Mammary epithelial cell (primary cell): ENCODE measurements at regions of chr6 and their contacts with region 1.

Region 1: DNA sequence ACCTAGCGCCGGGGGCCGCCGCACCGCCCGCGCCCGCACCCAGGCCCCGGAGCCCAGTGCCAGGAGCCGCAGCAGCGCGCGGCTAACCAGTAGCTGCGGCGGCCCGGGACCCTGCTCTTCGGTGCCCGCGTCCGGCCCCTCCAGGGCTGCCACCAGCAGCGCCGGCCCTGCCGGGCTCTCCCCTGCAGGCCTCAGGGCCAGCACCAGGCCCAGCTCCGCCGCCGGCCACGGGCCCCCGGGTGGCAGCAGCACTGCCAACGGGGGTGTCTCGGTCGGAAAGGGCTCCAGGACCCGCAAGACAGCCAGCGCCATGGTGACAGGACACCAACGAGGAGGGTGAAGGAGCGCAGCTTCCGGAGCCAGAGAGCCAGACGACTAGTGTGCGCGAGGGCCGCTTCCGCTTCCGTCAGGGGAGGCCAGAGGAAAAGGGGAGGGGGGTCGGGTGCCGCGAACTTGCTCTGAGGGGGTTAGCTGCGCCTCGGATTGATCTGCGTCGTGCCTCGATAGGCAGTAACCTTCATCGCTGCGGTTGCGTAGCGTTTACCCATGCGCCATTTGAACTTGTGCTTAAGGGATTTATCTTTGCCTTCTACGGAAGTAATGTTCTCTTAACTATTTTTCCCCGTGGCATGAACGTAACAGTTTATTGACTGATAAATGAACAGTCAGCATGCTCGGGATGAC is at the start of gene PEX6:
- DNase-seq: peak; percentile 79
- H3K4me3 ChIP-seq: peak within 1 kb of the TSS; percentile 47 to 82 (median 58)
- H3K27ac ChIP-seq: peak within 1 kb of the TSS; percentile 63
- H3K4me1 ChIP-seq: peaks cover 30% of the 10 kb centered on the region
- H3K27me3 ChIP-seq: no peaks in the 10 kb centered on the region
- CTCF ChIP-seq: no peak
- total RNA-seq, gene PEX6: 12.9 to 22.2 TPM

Region 2: DNA sequence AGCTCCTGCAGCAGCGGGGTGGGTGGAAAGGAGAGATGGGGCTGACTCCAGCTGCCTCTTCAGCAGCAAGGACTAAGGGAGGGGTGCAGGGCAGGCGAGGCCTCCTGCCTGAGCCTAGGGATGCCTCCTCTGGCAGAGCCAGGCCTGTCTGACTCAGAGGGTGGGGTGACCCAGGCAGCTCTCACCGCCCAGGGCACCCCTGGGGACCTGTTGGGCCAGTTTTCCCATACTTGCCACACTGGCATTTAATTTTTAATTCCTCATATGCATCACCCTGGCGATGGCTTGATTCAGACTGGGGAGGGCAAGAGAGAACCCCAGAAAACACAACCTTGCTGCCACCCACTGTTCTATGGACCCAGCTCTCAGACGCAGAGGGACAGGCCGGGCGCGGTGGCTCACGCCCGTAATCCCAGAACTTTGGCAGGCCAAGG is 856.2 kb before region 1 on chr6:
- CTCF ChIA-PET with region 1: no interaction called
- dilution Hi-C with region 1: no loop called
- in situ Hi-C with region 1: no loop called
- intact Hi-C with region 1: no loop called
- DNase-seq: peak; percentile 94
- H3K4me3 ChIP-seq: no peak overlapping the region
- H3K27ac ChIP-seq: peak overlapping the region; percentile 27
- H3K4me1 ChIP-seq: peaks cover 48% of the 10 kb centered on the region
- H3K27me3 ChIP-seq: no peaks in the 10 kb centered on the region
- CTCF ChIP-seq: peak in 1 of 2 donors; percentile 10

Region 3: GRCh38 chr6:42928986-42929820 is 49.8 kb before region 1 on chr6 and contains the start of gene CNPY3:
- CTCF ChIA-PET with region 1: no interaction called
- dilution Hi-C with region 1: no loop called
- in situ Hi-C with region 1: no loop called
- intact Hi-C with region 1: loop called (anchors 1 kb)
- DNase-seq: peak; percentile 98
- H3K4me3 ChIP-seq: peak within 1 kb of the TSS; percentile 64 to 87 (median 78)
- H3K27ac ChIP-seq: peak within 1 kb of the TSS; percentile 72
- H3K4me1 ChIP-seq: peaks cover 14% of the 10 kb centered on the region
- H3K27me3 ChIP-seq: no peaks in the 10 kb centered on the region
- CTCF ChIP-seq: no peak
- total RNA-seq, gene CNPY3: 30.6 to 33.0 TPM

Region 4: GRCh38 chr6:42996513-42996912 is 17.5 kb after region 1 on chr6:
- CTCF ChIA-PET with region 1: interaction called, 31 read pairs
- dilution Hi-C with region 1: no loop called
- in situ Hi-C with region 1: no loop called
- intact Hi-C with region 1: no loop called
- DNase-seq: no peak
- H3K4me3 ChIP-seq: no peak overlapping the region
- H3K27ac ChIP-seq: no peak overlapping the region
- H3K4me1 ChIP-seq: no peaks in the 10 kb centered on the region
- H3K27me3 ChIP-seq: no peaks in the 10 kb centered on the region
- CTCF ChIP-seq: peak in 1 of 2 donors; percentile 9

Region 5: DNA sequence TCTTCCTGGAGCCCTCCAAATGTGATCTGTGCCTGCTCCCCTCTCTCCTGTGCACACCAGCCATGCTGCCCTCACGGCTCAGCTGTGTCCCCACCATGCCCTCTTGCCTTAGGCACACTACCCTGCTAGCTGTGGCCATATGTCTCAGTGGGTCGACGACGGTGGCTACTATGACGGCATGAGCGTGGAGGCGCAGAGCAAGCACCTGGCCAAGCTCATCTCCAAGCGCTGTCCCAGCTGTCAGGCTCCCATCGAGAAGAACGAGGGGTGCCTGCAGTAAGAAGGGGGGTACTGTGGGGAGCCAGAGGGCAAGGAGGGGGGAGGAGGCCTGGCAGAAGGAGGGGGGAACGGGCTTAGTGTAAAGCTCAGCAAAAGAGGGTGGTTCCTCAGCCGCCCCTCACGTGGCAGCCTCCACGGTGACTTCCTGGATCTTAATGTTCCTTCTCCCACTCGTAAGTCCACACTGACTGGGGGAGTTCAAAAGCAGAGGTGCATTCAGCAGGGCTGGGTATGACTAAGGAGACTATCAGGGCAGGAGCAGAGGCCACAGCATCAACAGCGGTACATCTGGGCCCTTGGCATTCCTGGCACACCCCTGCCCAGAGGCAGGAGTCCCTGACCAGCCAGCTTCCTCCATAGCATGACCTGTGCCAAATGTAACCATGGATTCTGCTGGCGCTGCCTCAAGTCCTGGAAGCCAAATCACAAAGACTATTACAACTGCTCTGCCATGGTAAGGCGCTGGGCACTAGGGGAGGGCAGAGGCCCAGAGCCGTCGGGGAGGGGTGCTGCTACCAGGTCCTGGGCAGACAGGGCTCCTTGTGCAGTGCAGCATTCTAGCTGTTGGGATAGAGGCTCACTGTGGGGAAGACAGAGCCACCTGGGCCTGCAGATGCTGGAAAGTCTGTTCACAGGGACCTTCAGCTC is 242.3 kb after region 1 on chr6:
- CTCF ChIA-PET with region 1: no interaction called
- dilution Hi-C with region 1: no loop called
- in situ Hi-C with region 1: no loop called
- intact Hi-C with region 1: no loop called
- DNase-seq: peak; percentile 29
- H3K4me3 ChIP-seq: no peak overlapping the region
- H3K27ac ChIP-seq: no peak overlapping the region
- H3K4me1 ChIP-seq: peaks cover 13% of the 10 kb centered on the region
- H3K27me3 ChIP-seq: no peaks in the 10 kb centered on the region
- CTCF ChIP-seq: no peak